ENCODE measurements at regions of chr22 and their contacts with region 1.

Region 1: DNA sequence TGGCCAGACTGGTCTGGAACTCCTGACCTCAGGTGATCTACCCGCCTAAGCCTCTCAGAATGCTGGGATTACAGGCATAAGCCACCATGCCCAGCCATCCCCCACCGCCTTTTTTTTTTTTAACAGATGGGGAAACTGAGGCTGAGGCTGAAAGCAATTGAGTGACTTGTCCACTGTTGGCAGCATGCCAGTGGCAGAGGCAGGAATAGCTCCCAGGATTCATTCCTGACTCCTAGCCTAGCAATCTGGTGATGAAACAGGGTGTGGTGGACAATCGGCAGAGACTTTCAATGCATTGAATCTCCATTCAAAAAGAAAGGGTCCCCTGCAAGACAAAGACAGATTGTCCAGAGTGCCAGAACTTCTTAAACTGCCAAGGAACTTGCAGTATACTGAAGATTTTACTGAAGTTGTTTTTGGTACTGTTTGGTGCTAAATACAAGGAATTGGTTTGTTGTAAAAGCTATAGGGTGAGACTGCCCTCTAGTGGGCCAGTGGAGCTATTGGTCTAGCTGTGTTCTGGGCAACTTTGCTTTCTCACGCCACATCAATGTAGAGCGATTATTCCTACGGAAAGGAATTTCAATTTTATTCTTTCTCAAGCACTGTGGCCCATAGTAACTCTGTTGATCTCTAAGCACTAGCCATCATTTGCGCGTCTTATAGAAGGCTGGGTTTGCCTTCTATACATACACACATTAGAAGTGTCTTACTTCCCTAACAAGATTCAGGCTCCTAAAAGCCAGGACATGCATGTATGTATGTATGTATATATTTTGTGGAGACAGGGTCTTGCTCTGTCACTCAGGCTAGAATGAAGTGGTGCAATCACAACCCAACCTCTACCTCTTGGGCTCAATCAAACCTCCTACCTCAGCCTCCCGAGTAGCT is 21.0 kb downstream of the C22orf31 start:
- DNase-seq: peak; percentile 44 to 70
- H3K4me3 ChIP-seq: no peak overlapping the region
- H3K27ac ChIP-seq: no peak overlapping the region
- H3K4me1 ChIP-seq: peaks cover 22% of the 10 kb centered on the region
- H3K27me3 ChIP-seq: no peaks in the 10 kb centered on the region
- CTCF ChIP-seq: peak; percentile 98

Region 2: GRCh38 chr22:28855355-28856094 is 185.1 kb before region 1 on chr22:
- CTCF ChIA-PET with region 1: interaction called, 11 read pairs
- POLR2A ChIA-PET with region 1: no interaction called
- intact Hi-C with region 1: loop called (anchors 1 kb)
- DNase-seq: peak; percentile 17 to 41
- H3K4me3 ChIP-seq: no peak overlapping the region
- H3K27ac ChIP-seq: no peak overlapping the region
- H3K4me1 ChIP-seq: no peaks in the 10 kb centered on the region
- H3K27me3 ChIP-seq: no peaks in the 10 kb centered on the region
- CTCF ChIP-seq: peak; percentile 97

Region 3: GRCh38 chr22:28951969-28952521 is 88.6 kb before region 1 on chr22:
- CTCF ChIA-PET with region 1: no interaction called
- POLR2A ChIA-PET with region 1: interaction called, 15 read pairs
- intact Hi-C with region 1: no loop called
- DNase-seq: peak in 1 of 2 experiments; percentile 15
- H3K4me3 ChIP-seq: no peak overlapping the region
- H3K27ac ChIP-seq: no peak overlapping the region
- H3K4me1 ChIP-seq: 0 out of 2 replicates have a peak, but pooled peaks cover 12% of the 10 kb centered on the region
- H3K27me3 ChIP-seq: no peaks in the 10 kb centered on the region
- CTCF ChIP-seq: no peak

Region 4: GRCh38 chr22:29154364-29155048 is 113.9 kb after region 1 on chr22:
- CTCF ChIA-PET with region 1: interaction called, 7 read pairs
- POLR2A ChIA-PET with region 1: no interaction called
- intact Hi-C with region 1: loop called (anchors 10 kb)
- DNase-seq: peak in 1 of 2 experiments; percentile 64
- H3K4me3 ChIP-seq: no peak overlapping the region; the same call in 1 of the 2 replicates
- H3K27ac ChIP-seq: no peak overlapping the region
- H3K4me1 ChIP-seq: 0 out of 2 replicates have a peak, but pooled peaks cover 4% of the 10 kb centered on the region
- H3K27me3 ChIP-seq: no peaks in the 10 kb centered on the region
- CTCF ChIP-seq: peak; percentile 91

Measured in PC-9 (cell line).